GM12878 (cell line): ENCODE measurements at regions of chr1 and their contacts with region 1.

Region 1: GRCh38 chr1:241895013-241895412 is 47.0 kb downstream of the EXO1 start:
- DNase-seq: no peak
- ATAC-seq: peak; percentile 84
- H3K4me3 ChIP-seq: no peak overlapping the region
- H3K27ac ChIP-seq: no peak overlapping the region
- H3K4me1 ChIP-seq: peaks cover 3% of the 10 kb centered on the region; the same call in 1 of the 2 replicates
- H3K27me3 ChIP-seq: no peaks in the 10 kb centered on the region
- CTCF ChIP-seq: no peak
- EP300 ChIP-seq: no peak
- POLR2A ChIP-seq: no peak
- RAD21 ChIP-seq: no peak

Region 2: GRCh38 chr1:241964550-241965282 is 69.7 kb after region 1 on chr1:
- CTCF ChIA-PET with region 1: no interaction called
- POLR2A ChIA-PET with region 1: no interaction called
- RAD21 ChIA-PET with region 1: no interaction called
- SMC1A ChIA-PET with region 1: no interaction called
- in situ Hi-C with region 1: no loop called
- intact Hi-C with region 1: no loop called
- DNase-seq: no peak
- ATAC-seq: no peak
- H3K4me3 ChIP-seq: no peak overlapping the region
- H3K27ac ChIP-seq: no peak overlapping the region
- H3K4me1 ChIP-seq: no peaks in the 10 kb centered on the region
- H3K27me3 ChIP-seq: no peaks in the 10 kb centered on the region
- CTCF ChIP-seq: no peak
- EP300 ChIP-seq: no peak
- POLR2A ChIP-seq: no peak
- RAD21 ChIP-seq: no peak

Region 3: GRCh38 chr1:241985787-241986186 is 90.8 kb after region 1 on chr1:
- CTCF ChIA-PET with region 1: interaction called, 36 read pairs
- POLR2A ChIA-PET with region 1: no interaction called
- RAD21 ChIA-PET with region 1: interaction called, 14 read pairs
- SMC1A ChIA-PET with region 1: interaction called, 6 read pairs
- in situ Hi-C with region 1: no loop called
- intact Hi-C with region 1: loop called (anchors 1 kb)
- DNase-seq: no peak
- ATAC-seq: peak; percentile 19; the same call in 1 of the 3 replicates
- H3K4me3 ChIP-seq: no peak overlapping the region
- H3K27ac ChIP-seq: no peak overlapping the region
- H3K4me1 ChIP-seq: no peaks in the 10 kb centered on the region
- H3K27me3 ChIP-seq: no peaks in the 10 kb centered on the region
- CTCF ChIP-seq: peak; percentile 45 to 52 (median 52); a peak in 5 of 6 replicates
- EP300 ChIP-seq: no peak
- POLR2A ChIP-seq: no peak
- RAD21 ChIP-seq: peak; percentile 51